ENCODE measurements at regions of chr3 and their contacts with region 1.

Region 1: DNA sequence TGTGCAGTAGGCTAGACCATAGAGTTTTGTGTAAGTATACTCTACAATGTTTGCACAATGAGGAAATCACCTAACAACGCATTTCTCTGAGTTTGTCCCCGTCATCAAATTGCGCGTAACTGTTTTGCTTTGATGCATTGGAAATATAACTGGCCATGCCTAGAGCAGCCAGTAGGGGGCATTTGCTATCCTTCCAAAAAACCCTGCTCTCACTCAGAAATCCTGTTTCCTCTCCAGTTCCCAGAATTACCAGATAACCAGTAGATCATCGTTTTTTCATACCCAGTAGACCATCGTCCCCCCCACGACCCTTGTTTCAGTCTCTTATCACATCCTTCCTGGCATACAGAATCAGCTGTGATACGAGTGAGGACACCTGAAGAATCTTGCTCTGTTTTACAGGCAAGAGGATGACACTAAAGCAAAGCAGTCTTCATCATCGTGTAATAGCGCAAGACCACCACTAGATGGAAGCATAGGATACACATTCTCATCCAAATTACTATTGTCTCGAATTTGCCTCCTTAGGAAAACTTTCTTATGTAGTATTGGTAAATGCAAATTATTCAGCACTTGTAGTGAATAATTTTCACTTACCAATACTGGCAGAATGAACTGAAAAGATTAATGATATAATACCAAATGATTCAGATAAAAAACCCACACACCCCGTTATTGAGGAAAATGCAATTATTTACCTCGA is 4.4 kb upstream of the GABRR3 start:
- ATAC-seq: peak; percentile 76 to 97 (median 91)
- H3K4me3 ChIP-seq: peak overlapping the region; percentile 28 to 52 (median 48)
- H3K27ac ChIP-seq: no peak overlapping the region
- H3K4me1 ChIP-seq: no peaks in the 10 kb centered on the region

Region 2: DNA sequence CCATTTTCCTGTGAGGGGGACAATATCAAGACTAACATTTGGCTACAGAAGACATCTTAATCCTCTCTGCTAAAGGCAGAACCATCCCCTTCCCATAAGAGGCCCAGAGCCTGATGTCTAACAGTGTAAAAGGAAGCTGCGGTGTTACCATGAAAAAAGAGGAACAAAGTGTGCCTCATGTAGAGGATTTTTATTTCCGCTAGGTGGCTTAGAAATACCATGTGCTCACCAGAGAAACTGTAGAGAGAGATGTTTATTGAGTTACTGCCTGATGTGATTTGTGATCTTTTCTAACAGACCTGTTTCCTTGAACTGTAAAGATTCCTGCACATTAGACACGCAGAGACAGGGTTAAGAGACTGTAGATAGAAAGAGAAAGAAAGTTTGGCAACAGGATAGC is 149.1 kb after region 1 on chr3:
- in situ Hi-C with region 1: loop called in 1 of 9 experiments (anchors 25 kb)
- ATAC-seq: peak in 3 of 8 experiments; percentile 52 to 85 (median 60)
- H3K4me3 ChIP-seq: no peak overlapping the region
- H3K27ac ChIP-seq: no peak overlapping the region
- H3K4me1 ChIP-seq: no peaks in the 10 kb centered on the region

Region 3: DNA sequence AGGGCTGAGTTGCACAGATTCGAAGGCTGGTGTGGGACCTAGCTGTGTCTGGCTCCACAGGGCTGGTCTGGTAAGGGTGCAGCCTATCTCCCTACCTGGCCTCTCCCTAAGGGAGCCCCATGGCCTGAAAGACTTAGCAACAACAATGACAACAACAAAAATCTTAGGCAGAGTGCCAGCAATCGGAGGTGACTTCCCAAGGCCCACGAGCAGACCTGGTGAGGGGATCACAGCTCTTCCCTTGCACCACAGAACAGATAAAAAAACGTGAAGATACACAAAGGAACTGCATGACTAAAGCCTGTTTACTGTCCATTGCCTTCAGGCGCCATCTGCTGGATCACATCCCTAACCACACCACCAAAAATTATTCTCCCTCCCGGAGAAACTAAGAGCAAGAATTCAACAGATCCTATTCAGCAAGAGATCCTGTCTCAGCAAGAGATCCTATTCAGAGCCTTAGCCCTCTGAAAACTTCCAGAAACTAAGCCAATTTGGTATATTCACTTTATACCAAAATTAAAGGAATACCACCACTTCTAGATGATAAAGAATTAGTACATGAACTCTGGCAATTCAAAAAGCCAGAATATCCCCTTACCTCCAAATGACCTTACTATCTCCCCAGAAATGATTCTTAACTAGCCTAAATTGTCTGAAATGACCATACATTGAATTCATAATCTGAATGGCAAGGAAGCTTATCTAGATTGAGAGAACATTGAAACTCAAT is 290.1 kb after region 1 on chr3:
- in situ Hi-C with region 1: loop called in 5 of 9 experiments (anchors 10 to 25 kb)
- ATAC-seq: peak; percentile 58 to 87 (median 71)
- H3K4me3 ChIP-seq: no peak overlapping the region
- H3K27ac ChIP-seq: no peak overlapping the region
- H3K4me1 ChIP-seq: no peaks in the 10 kb centered on the region

Region 4: DNA sequence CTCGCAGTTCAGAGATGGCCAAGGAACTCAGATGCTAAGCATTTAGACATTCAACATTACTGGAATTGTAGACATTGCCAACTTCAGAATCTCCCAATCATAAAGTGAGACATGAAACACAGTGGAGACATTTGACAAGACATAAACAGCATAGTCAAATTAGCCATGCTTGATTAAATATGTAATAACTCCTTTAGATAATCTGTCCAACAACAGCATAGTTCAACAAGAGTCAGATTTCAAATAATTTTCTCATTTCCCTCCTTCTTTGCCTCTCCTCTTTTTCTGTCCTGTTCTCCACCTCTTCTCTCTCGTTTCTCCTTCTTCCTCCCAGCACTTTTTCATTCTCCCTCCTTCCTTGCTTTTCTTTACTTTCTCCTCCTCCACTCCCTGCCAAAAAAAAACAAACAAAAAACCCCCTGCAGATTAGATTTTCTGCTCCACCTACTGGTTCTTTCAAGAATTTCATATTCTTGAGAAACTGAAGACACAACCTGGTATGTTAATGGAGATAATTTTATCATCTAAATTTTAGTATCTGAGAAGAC is 533.8 kb after region 1 on chr3:
- in situ Hi-C with region 1: loop called in 1 of 9 experiments (anchors 25 kb)
- ATAC-seq: peak in 3 of 8 experiments; percentile 37 to 62 (median 41)
- H3K4me3 ChIP-seq: no peak overlapping the region
- H3K27ac ChIP-seq: no peak overlapping the region
- H3K4me1 ChIP-seq: no peaks in the 10 kb centered on the region

Region 5: DNA sequence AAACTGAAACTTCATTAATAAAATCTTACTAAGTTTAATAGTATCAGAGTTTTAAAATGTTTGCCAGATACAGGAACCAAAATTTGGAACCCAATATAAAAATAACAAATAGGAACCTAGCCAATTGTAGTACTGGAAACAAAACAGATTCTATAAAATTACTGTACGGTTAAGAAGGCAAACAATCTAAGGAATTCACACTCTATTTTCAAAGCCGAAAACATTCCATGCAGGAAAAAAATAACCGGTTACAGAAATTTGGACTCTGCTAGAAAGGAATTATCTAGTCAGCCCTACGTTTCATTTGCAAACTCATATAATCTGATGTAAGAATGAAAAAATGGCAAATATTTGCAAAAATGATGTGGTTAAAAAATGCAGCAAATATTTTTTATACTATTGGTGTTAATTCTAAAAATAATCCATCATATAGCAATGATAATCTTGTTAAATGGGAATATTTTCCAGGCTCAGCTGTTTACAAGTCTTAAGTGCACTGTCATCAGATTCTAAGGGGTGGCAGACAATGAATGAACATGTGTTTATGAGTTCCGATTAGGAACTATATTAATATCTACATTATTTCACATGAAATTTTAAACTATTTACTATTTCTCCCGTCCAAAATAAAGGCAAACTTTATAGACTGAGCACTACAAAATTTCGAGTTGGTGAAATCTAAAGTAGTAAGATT is 803.9 kb after region 1 on chr3:
- in situ Hi-C with region 1: no loop called
- ATAC-seq: no peak
- H3K4me3 ChIP-seq: no peak overlapping the region
- H3K27ac ChIP-seq: no peak overlapping the region
- H3K4me1 ChIP-seq: no peaks in the 10 kb centered on the region

Region 6: DNA sequence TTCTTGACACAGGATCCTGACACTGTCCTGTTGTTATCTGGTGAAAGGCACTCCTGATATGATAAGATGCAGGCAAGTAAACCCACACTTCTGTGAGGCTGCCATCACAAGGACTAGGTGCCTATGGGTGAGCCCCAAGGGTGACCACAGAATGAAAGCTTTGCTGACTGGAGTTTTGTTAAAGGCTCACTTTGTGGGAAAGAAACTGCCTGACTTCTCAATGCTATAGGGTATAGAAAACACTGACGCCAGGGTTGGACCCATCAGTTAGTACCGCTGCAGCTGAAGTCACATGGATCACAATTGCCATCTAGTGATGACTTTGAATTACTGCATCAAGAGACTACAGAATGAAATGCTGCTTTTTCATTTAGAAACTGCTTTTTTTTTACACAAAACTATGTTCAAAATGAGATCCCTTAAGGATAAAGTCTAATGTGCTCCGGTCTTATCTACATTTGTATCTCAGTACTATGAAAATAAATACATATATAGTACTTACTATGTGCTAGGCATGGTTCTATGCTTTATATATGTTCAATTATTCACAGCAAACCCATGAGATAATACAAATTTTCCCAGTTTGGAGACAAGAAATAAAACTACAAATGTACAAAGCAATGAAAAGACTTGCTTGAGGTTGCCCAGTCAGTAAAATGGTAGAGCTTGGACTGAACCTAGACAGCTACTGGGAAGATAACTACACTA is 1713.9 kb after region 1 on chr3:
- in situ Hi-C with region 1: loop called in 1 of 9 experiments (anchors 25 kb)
- ATAC-seq: peak; percentile 76 to 92 (median 80)
- H3K4me3 ChIP-seq: no peak overlapping the region
- H3K27ac ChIP-seq: no peak overlapping the region
- H3K4me1 ChIP-seq: no peaks in the 10 kb centered on the region